Mammary epithelial cell (primary cell): ENCODE measurements at regions of chr17 and their contacts with region 1.

Region 1: DNA sequence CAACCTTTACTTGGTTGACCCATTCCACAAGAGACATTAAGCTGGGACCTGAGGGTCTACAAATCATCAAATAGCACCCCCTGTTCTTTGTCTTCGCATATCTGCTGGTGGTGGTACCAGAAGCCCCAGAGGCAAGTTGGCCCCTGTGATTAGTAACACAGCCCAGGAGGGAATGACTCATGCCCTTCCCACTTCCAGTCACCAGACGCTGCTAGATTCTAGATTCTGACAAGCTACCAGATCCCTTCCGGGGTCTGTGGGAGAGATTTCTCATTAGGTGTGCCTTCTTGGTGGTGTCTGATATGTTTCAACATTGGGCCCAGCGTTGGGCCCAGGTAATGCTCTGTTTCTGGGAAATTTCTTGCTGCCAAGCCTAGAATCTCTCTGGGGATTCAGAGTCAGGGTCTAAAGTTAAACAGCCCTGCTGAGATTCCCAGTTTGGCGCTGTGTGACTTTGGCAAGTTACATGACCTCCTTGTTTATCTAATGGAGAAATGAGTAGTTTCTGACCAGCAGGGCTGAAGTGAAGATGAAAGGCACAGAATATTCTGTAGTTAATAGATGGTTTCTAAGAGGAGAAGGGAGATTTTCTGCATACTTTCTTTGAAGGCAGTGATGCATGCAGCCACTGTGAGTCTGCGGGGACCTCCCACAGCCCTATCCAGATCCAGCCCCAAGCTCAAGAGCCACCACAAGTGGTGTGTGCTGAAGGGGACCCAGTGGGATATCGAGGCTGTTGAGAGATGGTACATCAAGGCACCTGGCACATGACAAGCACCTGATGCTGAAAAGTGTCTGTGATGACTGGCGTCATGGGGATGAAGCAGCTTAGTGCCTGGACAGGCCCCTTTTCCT is 3.9 kb downstream of the TRPV2 start:
- DNase-seq: peak; percentile 87
- H3K4me3 ChIP-seq: no peak overlapping the region
- H3K27ac ChIP-seq: no peak overlapping the region
- H3K4me1 ChIP-seq: peaks cover 31% of the 10 kb centered on the region
- H3K27me3 ChIP-seq: no peaks in the 10 kb centered on the region
- CTCF ChIP-seq: no peak

Region 2: GRCh38 chr17:16363749-16364536 is 55.4 kb before region 1 on chr17:
- CTCF ChIA-PET with region 1: no interaction called
- dilution Hi-C with region 1: no loop called
- in situ Hi-C with region 1: no loop called
- intact Hi-C with region 1: loop called (anchors 2 kb)
- DNase-seq: peak; percentile 55
- H3K4me3 ChIP-seq: no peak overlapping the region
- H3K27ac ChIP-seq: no peak overlapping the region
- H3K4me1 ChIP-seq: no peaks in the 10 kb centered on the region
- H3K27me3 ChIP-seq: no peaks in the 10 kb centered on the region
- CTCF ChIP-seq: peak; percentile 93 to 98

Region 3: DNA sequence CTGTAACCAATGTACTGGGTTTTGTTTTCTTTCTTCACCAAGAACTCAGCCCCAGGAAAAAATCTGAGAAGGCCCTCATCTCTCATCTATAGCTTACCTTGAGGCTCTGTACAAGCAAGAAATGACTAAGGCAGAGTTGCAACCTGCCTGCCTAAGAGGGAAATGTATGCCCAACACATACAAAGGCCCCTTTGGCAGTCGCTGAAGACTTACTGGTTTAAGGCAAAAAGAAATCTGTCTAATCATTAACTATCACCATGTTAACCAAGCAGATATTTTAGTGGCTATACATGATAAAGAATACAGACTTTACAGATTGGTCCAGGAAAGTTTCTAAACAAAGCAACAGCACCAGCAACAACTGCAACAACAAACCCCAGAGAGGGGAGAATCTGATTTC is 220.1 kb after region 1 on chr17:
- CTCF ChIA-PET with region 1: no interaction called
- dilution Hi-C with region 1: no loop called
- in situ Hi-C with region 1: no loop called
- intact Hi-C with region 1: no loop called
- DNase-seq: no peak
- H3K4me3 ChIP-seq: no peak overlapping the region
- H3K27ac ChIP-seq: no peak overlapping the region
- H3K4me1 ChIP-seq: no peaks in the 10 kb centered on the region
- H3K27me3 ChIP-seq: no peaks in the 10 kb centered on the region
- CTCF ChIP-seq: no peak